Activated T-helper 1 cell treated with anti-CD3 and anti-CD28 coated beads, Interleukin-12 subunit alpha, Interleukin-12 subunit beta, Interleukin-2, Interleukin-4 antibody, amounts not matched to agents 30 ng/mL and 10 ng/mL and 1 ng/mL, durations not matched to agents 14 hours and 24 hours and 36 hours (primary cell): ENCODE measurements at regions of chr1 and their contacts with region 1.

Region 1: DNA sequence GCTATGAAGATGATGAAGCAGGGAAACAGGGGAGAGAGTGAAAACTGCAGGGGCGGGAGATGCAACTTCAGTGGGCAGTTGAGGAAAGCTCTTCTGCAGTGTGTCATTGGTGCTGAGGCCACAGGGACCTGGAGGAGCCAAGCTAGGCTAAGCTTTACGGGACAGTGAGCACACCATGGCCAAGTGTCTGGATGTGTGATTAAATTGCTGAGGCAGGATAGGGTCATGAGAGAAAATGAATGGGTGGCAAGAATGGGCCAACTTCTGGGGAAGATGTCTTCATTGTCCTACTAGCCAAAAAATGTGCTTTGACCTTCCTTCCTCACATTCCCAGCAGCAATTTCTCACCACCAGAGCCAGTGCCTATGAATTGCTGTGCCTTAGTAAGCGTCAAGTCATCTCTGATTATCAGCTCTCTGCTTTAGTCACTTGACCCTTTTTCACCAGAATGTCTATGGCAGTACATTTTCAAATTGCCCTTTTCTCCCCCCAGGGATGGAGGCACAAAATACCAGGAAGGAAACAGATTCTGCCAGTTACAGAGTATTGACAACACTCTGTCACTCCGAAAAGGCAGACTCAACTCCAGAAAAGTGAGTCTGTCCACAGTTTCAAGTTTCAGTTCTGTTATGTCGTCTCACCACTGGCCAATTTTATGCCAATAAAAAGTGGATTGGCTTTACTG is 167.5 kb downstream of the TNFSF18 start:
- DNase-seq: no peak
- H3K4me3 Mint-ChIP-seq: no peak overlapping the region
- H3K27ac Mint-ChIP-seq: peak overlapping the region; percentile 46
- H3K4me1 Mint-ChIP-seq: peaks cover 14% of the 10 kb centered on the region
- H3K27me3 Mint-ChIP-seq: peaks cover 65% of the 10 kb centered on the region

Region 2: DNA sequence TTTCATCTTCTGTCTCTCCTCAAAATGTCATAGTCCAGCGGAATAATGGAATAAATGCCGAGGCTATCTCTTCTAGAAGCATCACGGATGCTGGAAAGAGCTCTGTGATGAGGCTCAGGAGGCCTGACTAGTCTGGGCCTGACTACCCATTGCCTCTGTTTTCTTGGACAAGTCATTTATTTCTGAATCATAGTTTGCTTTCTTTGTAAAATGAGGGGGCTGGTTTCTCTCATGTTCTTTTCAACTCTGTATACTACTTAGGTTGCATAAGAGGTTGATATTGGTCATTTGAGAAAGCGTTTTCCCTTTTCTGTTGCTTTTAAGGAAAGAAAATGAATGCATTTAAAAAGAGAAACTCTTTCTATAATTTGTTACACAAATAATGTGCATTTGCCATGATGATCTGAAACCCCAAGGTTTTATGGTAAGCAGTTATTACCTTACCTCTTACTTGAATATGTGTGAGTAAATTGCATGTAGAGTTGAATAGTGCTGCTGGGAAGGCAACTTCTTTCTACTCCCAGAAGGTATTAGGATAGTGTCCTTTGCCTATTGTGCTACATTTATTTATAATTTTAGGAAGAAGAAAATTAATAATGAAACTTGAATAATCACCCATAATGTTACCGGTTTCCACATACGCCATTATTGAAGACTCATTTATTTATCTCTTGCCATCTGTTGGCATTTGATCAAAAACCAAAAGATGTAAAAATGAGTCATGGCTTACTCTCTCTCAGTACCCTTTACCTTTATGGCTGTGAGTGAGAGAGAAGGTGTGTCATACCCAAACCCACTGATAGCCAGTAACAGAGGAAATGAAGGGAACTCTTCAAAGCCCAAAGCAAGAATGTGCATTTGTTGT is 45.2 kb before region 1 on chr1:
- intact Hi-C with region 1: loop called (anchors 1 kb)
- DNase-seq: peak; percentile 29
- H3K4me3 Mint-ChIP-seq: no peak overlapping the region
- H3K27ac Mint-ChIP-seq: peak overlapping the region; percentile 26
- H3K4me1 Mint-ChIP-seq: peaks cover 46% of the 10 kb centered on the region
- H3K27me3 Mint-ChIP-seq: peaks cover 65% of the 10 kb centered on the region

Region 3: DNA sequence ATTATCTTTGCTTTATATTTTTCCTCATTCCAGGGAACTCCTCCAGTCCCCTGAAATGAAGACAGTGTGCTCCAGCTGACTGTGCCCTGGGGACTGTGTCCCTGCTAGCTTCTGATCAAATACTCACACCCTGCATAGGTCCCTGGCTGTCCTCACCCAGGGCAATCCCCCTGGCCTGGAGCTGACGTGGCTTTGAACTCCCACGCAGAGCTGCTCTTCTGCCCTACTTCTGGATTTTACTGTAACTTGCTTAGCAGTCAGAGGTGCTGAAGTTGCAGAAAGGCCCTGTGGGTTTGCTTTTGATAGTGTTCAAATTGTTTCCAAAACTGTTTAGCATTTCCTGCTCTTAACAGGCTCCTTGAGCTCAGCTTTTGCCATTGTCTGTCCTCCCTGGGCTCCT is 37.9 kb before region 1 on chr1:
- intact Hi-C with region 1: loop called (anchors 1 kb)
- DNase-seq: peak; percentile 44
- H3K4me3 Mint-ChIP-seq: peak overlapping the region; percentile 23
- H3K27ac Mint-ChIP-seq: peak overlapping the region; percentile 44
- H3K4me1 Mint-ChIP-seq: peaks cover 33% of the 10 kb centered on the region
- H3K27me3 Mint-ChIP-seq: peaks cover 45% of the 10 kb centered on the region

Region 4: GRCh38 chr1:172906778-172907592 is 23.7 kb after region 1 on chr1:
- intact Hi-C with region 1: no loop called
- DNase-seq: no peak
- H3K4me3 Mint-ChIP-seq: no peak overlapping the region
- H3K27ac Mint-ChIP-seq: peak overlapping the region; percentile 13
- H3K4me1 Mint-ChIP-seq: peaks cover 9% of the 10 kb centered on the region
- H3K27me3 Mint-ChIP-seq: peaks cover 23% of the 10 kb centered on the region

Region 5: GRCh38 chr1:172976222-172977041 is 93.2 kb after region 1 on chr1:
- intact Hi-C with region 1: no loop called
- DNase-seq: no peak
- H3K4me3 Mint-ChIP-seq: no peak overlapping the region
- H3K27ac Mint-ChIP-seq: no peak overlapping the region
- H3K4me1 Mint-ChIP-seq: no peaks in the 10 kb centered on the region
- H3K27me3 Mint-ChIP-seq: peaks cover 16% of the 10 kb centered on the region